ENCODE measurements at regions of chr19 and their contacts with region 1.

Region 1: DNA sequence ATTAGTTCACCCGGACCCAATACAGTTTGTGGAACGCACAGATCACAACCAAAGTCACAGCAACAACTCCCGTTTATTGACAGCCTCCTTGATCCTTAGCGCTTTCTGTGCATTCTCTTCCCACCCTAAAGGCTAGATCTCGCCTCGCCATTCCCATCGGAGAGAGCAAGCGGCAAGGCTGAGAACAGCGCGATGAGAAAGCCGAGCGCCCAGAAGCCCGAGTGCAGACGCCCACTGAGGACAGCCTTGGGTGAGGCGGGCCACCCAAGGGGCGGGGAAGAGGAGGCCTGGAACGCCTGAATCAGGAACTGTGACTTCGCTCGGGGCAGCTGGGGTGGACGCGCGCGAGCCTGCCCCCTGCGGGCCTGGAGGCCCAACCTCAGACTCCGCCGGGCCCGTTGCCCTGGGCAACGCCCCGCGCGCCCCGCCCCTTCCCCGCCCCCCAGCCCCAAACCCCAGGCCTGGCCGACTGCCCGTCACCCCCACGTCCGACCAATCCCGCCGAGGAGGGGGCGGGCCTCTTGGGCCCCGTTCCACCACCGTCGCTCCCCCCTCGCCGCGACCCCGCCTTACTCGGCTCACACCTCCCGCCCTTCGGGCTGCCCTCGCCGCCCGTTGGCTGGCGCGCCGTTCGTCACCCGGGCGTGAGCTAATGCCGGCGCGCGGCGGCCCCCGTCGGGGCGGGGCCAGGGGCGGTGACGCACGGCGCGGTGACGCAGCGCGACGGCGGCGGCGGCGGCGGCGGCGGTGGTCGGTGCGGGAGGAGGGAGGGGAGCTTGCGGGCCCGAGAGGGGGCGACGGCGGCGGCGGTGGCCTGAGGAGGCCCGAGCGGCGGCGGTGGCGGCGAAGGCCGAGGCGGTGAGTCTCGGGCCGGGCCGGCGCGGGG is at the start of gene SAMD4B:
- DNase-seq: peak; percentile 87 to 99
- H3K4me3 ChIP-seq: peak within 1 kb of the TSS; percentile 89
- H3K27ac ChIP-seq: peak within 1 kb of the TSS; percentile 34
- H3K4me1 ChIP-seq: peaks cover 16% of the 10 kb centered on the region
- H3K27me3 ChIP-seq: no peaks in the 10 kb centered on the region
- CTCF ChIP-seq: peak; percentile 65
- total RNA-seq, gene SAMD4B: 152 and 163 TPM in 2 replicates

Region 2: GRCh38 chr19:38862321-38863059 is 479.5 kb before region 1 on chr19:
- CTCF ChIA-PET with region 1: no interaction called
- POLR2A ChIA-PET with region 1: interaction called, 19 read pairs
- intact Hi-C with region 1: no loop called
- DNase-seq: peak in 1 of 2 experiments; percentile 53
- H3K4me3 ChIP-seq: no peak overlapping the region
- H3K27ac ChIP-seq: peak overlapping the region; percentile 99
- H3K4me1 ChIP-seq: peaks cover 52% of the 10 kb centered on the region
- H3K27me3 ChIP-seq: no peaks in the 10 kb centered on the region
- CTCF ChIP-seq: no peak

Region 3: GRCh38 chr19:39110263-39110967 is 231.5 kb before region 1 on chr19:
- CTCF ChIA-PET with region 1: no interaction called
- POLR2A ChIA-PET with region 1: interaction called, 3 read pairs
- intact Hi-C with region 1: loop called (anchors 5 kb)
- DNase-seq: peak; percentile 42 to 65
- H3K4me3 ChIP-seq: no peak overlapping the region
- H3K27ac ChIP-seq: peak overlapping the region; percentile 88
- H3K4me1 ChIP-seq: peaks cover 23% of the 10 kb centered on the region
- H3K27me3 ChIP-seq: no peaks in the 10 kb centered on the region
- CTCF ChIP-seq: peak; percentile 90

Region 4: DNA sequence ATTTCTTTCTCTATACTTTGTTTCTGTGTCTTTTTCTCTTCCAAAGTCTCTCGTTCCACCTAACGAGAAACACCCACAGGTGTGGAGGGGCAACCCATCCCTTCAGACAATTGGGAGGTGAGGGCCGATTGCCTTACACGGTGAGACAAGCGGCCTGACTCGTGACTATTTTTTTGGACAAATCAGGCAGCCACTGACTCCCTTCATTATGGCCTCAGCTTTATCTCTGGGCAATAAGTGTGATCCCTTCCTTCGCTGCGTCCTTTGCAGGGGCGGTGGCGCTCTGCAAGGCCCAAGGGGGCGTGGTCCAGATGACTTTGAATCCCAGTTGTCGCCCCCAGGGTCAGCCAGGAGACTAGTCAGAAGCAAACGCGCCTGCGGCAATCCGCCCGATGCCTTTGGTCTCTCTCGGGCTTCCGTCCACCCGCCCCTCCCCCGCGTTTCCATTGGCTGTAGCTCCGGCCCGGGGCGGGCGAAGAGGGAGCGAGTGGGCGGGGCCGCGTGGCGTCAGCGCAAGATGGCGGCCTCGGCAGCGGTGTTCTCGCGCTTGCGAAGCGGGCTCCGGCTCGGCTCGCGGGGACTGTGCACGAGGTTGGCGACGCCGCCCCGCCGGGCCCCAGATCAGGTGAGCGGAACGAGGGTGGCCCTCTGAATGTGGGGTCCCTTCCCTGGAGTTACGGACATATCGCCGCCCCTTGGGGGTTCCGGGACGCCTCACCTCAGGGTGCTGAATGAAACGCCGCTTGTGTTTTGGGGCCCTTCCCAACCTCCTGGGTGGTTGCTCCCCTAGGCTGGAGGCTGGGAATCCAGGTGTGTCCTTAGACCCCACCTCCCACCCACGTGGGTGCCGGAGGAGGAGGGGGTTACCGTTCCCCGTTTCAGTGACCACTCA is 138.6 kb after region 1 on chr19 and contains the start of gene TIMM50:
- CTCF ChIA-PET with region 1: interaction called, 15 read pairs
- POLR2A ChIA-PET with region 1: no interaction called
- intact Hi-C with region 1: no loop called
- DNase-seq: peak; percentile 88 to 98
- H3K4me3 ChIP-seq: peak within 1 kb of the TSS; percentile 99
- H3K27ac ChIP-seq: peak within 1 kb of the TSS; percentile 94
- H3K4me1 ChIP-seq: peaks cover 13% of the 10 kb centered on the region; the same call in 1 of the 2 replicates
- H3K27me3 ChIP-seq: no peaks in the 10 kb centered on the region
- CTCF ChIP-seq: no peak
- total RNA-seq, gene TIMM50: 85.5 and 95.9 TPM in 2 replicates